Activated B cell treated with CpG ODN at 0.5 μM for 24 hours (primary cell): ENCODE measurements at regions of chr5 and their contacts with region 1.

Region 1: DNA sequence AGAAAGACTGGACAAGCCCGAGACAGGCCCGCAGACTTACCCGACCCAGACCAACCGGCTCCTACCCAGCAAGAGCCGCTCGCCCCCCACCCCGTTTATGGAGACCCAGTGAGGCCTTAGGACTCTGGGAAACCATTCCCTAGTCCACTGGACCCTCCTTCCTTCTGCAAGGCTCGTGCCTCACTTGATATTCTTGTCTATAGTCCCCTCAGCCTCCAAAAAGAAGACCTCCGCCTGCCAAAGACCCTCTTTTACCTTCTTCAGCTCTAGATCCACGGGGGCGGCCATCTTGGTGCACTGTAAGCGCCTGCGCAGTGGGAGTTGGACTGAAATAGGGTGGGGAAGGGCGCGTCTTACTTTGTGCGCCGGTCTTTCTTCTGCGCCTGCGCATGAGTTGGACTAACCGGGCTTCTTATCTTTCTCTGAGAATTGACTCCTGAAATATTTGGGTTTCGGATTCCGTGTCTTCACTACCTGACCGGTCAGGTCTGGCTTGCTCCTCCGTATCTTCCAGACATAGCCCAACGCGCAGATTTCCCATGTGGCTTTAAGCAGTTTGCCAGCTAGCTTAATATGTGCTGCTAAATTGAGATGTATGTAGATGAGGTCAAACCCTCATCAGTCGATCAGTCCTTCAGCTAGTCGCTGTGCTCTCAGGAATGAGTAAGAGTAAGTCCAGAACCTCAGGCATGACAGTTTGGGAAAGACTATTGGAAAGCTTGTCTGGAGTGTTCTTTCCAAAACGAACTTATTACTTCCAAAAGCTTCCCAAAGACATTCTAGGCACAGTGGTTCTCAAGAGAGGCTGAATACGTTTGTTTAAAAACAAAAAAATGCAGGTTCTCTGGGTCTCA is at the start of gene PFDN1:
- DNase-seq: peak; percentile 76
- ATAC-seq: peak; percentile 99
- H3K4me3 Mint-ChIP-seq: peak within 1 kb of the TSS; percentile 99
- H3K27ac Mint-ChIP-seq: peak within 1 kb of the TSS; percentile 97
- H3K4me1 Mint-ChIP-seq: peaks cover 21% of the 10 kb centered on the region
- H3K27me3 Mint-ChIP-seq: peaks cover 3% of the 10 kb centered on the region
- CTCF ChIP-seq: no peak
- total RNA-seq, gene PFDN1: 38.2 and 38.4 TPM in 2 replicates

Region 2: DNA sequence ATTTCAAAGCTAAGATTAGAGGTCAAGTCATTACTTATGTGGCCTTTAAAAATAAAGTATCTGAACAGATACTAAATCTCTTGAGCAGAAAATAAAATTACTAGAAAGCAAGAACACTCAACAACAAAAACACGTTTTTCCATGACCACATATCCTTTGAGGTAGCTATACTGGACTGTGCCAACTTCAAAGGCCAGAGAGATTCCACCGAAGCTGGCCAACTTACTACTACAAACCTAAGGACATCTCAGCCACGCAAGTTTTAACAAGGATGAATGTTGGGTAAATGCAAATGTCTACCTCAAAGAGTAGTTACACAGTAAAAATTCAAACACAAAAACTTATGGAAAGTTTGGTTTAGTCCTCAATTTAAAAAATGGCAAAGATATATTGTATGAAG is 19.0 kb before region 1 on chr5:
- CTCF ChIA-PET with region 1: no interaction called
- POLR2A ChIA-PET with region 1: interaction called, 3 read pairs
- intact Hi-C with region 1: loop called (anchors 1 kb)
- DNase-seq: no peak
- ATAC-seq: no peak
- H3K4me3 Mint-ChIP-seq: peak overlapping the region; percentile 79
- H3K27ac Mint-ChIP-seq: peak overlapping the region; percentile 85
- H3K4me1 Mint-ChIP-seq: peaks cover 27% of the 10 kb centered on the region
- H3K27me3 Mint-ChIP-seq: no peaks in the 10 kb centered on the region
- CTCF ChIP-seq: no peak

Region 3: DNA sequence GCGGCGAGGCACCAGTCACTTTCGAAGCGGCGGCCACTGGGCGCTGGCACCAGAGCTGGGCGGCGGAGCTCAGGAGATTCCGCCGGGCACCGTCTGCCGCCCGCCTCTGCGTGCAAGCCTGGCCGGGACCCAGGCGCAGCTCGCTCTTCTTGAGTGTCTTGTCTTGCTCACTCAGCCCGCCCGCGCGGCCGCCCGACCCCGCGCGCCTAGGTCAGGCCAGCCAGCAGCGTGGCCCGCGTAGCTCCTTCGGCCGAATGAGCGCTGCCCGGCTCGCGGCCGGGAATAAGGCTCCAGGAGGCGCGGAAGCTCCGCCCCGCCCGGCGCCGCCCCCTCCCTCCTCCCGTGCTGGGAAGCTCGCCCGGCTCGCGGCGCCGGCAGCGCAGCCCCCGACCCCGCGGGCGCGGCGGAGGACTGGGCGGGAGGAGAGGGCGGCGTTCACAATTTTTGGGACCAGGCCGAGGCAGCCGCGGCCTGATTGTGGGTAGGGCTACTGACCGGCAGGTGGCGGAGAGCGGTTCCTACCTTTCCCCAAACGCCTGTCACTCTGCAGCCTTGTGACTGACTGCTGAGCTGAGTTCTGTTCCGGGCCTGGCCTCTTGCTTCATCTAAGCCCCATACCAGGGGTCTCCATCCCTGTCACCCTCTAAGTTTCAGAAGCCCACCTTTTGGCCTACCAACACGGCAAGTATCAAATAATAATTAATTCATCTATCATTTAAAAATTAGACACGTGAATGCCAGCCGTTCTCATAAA is 43.5 kb after region 1 on chr5 and contains the start of gene HBEGF:
- CTCF ChIA-PET with region 1: interaction called, 6 read pairs
- POLR2A ChIA-PET with region 1: interaction called, 6 read pairs
- intact Hi-C with region 1: loop called (anchors 1 kb)
- DNase-seq: peak; percentile 58
- ATAC-seq: peak; percentile 80
- H3K4me3 Mint-ChIP-seq: peak within 1 kb of the TSS; percentile 78
- H3K27ac Mint-ChIP-seq: no peak within 1 kb of the TSS
- H3K4me1 Mint-ChIP-seq: peaks cover 51% of the 10 kb centered on the region
- H3K27me3 Mint-ChIP-seq: peaks cover 1% of the 10 kb centered on the region
- CTCF ChIP-seq: no peak
- total RNA-seq, gene HBEGF: 0.22 and 0.49 TPM in 2 replicates